HEK293 (cell line): ENCODE measurements at regions of chr5 and their contacts with region 1.

Region 1: GRCh38 chr5:56317923-56318561 is 84.9 kb upstream of the ANKRD55 start:
- H3K4me3 ChIP-seq: no peak overlapping the region
- H3K27ac ChIP-seq: no peak overlapping the region
- H3K4me1 ChIP-seq: no peaks in the 10 kb centered on the region
- CTCF ChIP-seq: no peak

Region 2: GRCh38 chr5:55994574-55995333 is 323.3 kb before region 1 on chr5 and contains the start of gene IL6ST:
- CTCF ChIA-PET with region 1: no interaction called
- POLR2A ChIA-PET with region 1: interaction called, 10 read pairs
- H3K4me3 ChIP-seq: peak within 1 kb of the TSS; percentile 85
- H3K27ac ChIP-seq: peak within 1 kb of the TSS; percentile 94
- H3K4me1 ChIP-seq: peaks cover 15% of the 10 kb centered on the region
- CTCF ChIP-seq: peak; percentile 75; the same call in 1 of the 2 replicates

Region 3: GRCh38 chr5:56330806-56331205 is 12.8 kb after region 1 on chr5:
- CTCF ChIA-PET with region 1: no interaction called
- POLR2A ChIA-PET with region 1: no interaction called
- H3K4me3 ChIP-seq: no peak overlapping the region
- H3K27ac ChIP-seq: no peak overlapping the region
- H3K4me1 ChIP-seq: no peaks in the 10 kb centered on the region
- CTCF ChIP-seq: no peak